A549 (cell line): ENCODE measurements at regions of chr17 and their contacts with region 1.

Region 1: GRCh38 chr17:7627250-7628121 is at the start of gene SAT2:
- DNase-seq: peak; percentile 94 to 99
- ATAC-seq: peak; percentile 91 to 94
- H3K4me3 ChIP-seq: peak within 1 kb of the TSS; percentile 85
- H3K27ac ChIP-seq: peak within 1 kb of the TSS; percentile 93 to 94
- H3K4me1 ChIP-seq: peaks cover 10% of the 10 kb centered on the region; the same call in 2 of the 3 replicates
- CTCF ChIP-seq: no peak
- EP300 ChIP-seq: no peak
- POLR2A ChIP-seq: peak; percentile 77
- RAD21 ChIP-seq: 0 out of 5 replicates have a peak, but pooled peaks of 1 of the 2 experiments have one; percentile 17
- polyA plus RNA-seq, gene SAT2: 38.1 and 44.4 TPM in 2 replicates

Region 2: GRCh38 chr17:7614422-7615264 is 12.8 kb before region 1 on chr17 and contains the start of gene FXR2:
- CTCF ChIA-PET with region 1: interaction called, 130 read pairs
- POLR2A ChIA-PET with region 1: interaction called, 34 read pairs
- DNase-seq: peak; percentile 99 to 100
- ATAC-seq: peak; percentile 91 to 96
- H3K4me3 ChIP-seq: peak within 1 kb of the TSS; percentile 84
- H3K27ac ChIP-seq: peak within 1 kb of the TSS; percentile 92 to 95
- H3K4me1 ChIP-seq: peaks cover 29% of the 10 kb centered on the region
- CTCF ChIP-seq: peak; percentile 58
- EP300 ChIP-seq: no peak
- POLR2A ChIP-seq: peak; percentile 77
- RAD21 ChIP-seq: 0 out of 5 replicates have a peak, but pooled peaks have one; percentile 10 to 29
- polyA plus RNA-seq, gene FXR2: 40.7 and 45.3 TPM in 2 replicates

Region 3: DNA sequence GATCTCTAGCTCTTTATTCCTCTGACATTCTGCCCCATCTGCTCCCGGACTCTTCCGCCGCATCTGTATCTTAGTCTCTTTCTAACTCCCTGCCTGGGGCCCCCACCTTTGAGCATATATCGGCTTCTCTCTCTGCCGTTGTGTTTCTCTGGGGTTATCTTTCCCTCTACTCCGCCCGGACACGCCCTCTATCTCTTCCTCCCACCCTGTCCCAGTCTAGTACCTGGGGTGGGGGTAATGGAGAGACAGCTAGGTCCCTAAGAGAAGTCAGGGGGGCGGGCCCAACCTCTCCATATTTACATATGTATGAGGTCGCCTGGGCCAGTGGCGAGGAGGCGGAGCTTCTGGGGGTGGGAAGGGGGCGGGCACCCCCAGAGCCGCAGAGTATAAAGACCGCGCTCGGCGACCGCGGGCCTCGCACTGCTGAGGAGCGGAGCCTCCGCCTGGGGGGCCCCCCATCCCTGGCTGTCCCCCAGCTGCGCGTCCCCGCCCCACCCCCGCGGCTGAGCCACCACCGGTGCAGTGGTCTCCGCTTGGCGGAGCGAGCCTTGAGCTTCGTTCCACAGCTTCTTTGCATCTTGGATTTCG is 23.1 kb after region 1 on chr17 and contains the start of gene ATP1B2:
- CTCF ChIA-PET with region 1: interaction called, 80 read pairs
- POLR2A ChIA-PET with region 1: interaction called, 13 read pairs
- DNase-seq: peak; percentile 59 to 90
- ATAC-seq: peak; percentile 63 to 85
- H3K4me3 ChIP-seq: peak within 1 kb of the TSS; percentile 59
- H3K27ac ChIP-seq: peak within 1 kb of the TSS in 1 of 2 experiments; percentile 58; a peak in 4 of 6 replicates
- H3K4me1 ChIP-seq: peaks cover 16% of the 10 kb centered on the region; the same call in 1 of the 3 replicates
- CTCF ChIP-seq: no peak
- EP300 ChIP-seq: no peak
- POLR2A ChIP-seq: no peak
- RAD21 ChIP-seq: no peak
- polyA plus RNA-seq, gene ATP1B2: 0.16 and 0.20 TPM in 2 replicates